SK-N-SH (cell line): ENCODE measurements at regions of chr10 and their contacts with region 1.

Region 1: DNA sequence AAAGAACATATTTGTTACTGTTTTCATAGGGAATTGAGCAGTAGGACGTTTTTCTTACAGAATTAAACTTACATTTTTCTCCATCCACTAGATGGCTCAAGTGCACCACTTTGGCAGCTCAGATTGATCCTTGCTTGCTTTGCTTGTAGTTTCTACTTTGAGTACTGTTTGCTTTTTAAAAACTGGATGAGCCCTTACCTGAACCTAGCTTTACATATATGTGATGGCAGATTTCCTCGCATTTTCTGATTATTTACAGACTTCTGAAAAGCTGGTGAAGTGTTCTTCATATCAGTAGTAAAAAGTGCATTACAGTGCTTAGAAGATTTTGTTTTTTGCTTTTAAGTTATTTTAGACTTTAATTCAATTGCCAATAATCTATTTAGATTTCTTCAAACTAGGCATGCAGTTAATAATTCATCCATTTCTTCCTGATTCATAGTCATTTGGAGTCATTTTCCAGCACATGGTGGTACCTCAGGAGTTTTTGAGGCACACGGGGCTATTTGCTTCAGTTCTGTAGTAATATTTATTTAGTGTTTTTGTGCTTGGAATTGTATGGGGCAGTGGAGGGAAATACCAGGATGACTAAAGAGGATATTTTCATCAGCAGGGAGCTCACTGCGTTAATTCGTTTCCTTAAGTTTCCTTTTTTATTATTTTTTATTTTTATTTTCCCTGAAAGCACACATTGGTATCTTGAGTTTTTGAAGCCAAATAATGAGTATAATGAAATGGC is 57.3 kb downstream of the MAPK8 start:
- DNase-seq: peak; percentile 30
- H3K4me3 ChIP-seq: no peak overlapping the region; a peak in 1 of 4 replicates
- H3K27ac ChIP-seq: peak overlapping the region; percentile 50 to 56; a peak in 3 of 4 replicates
- H3K4me1 ChIP-seq: peaks cover 15 to 26% of the 10 kb centered on the region in 2 experiments; a peak in 2 of 4 replicates
- H3K27me3 ChIP-seq: no peaks in the 10 kb centered on the region
- CTCF ChIP-seq: peak; percentile 82
- EP300 ChIP-seq: no peak
- RAD21 ChIP-seq: peak; percentile 96

Region 2: GRCh38 chr10:48309711-48310226 is 54.0 kb before region 1 on chr10:
- CTCF ChIA-PET with region 1: interaction called, 10 read pairs
- POLR2A ChIA-PET with region 1: no interaction called
- DNase-seq: peak; percentile 25
- H3K4me3 ChIP-seq: 0 out of 4 replicates have a peak overlapping the region, but pooled peaks of 1 of the 2 experiments have one; percentile 11
- H3K27ac ChIP-seq: peak overlapping the region in 1 of 2 experiments; percentile 48; a peak in 2 of 4 replicates
- H3K4me1 ChIP-seq: peaks cover 8 to 18% of the 10 kb centered on the region in 2 experiments; a peak in 3 of 4 replicates
- H3K27me3 ChIP-seq: no peaks in the 10 kb centered on the region
- CTCF ChIP-seq: peak; percentile 43
- EP300 ChIP-seq: peak in 1 of 2 experiments; percentile 7; a peak in 1 of 4 replicates
- RAD21 ChIP-seq: peak; percentile 59

Region 3: GRCh38 chr10:48377751-48378535 is 14.2 kb after region 1 on chr10:
- CTCF ChIA-PET with region 1: interaction called, 12 read pairs
- POLR2A ChIA-PET with region 1: no interaction called
- DNase-seq: no peak
- H3K4me3 ChIP-seq: no peak overlapping the region
- H3K27ac ChIP-seq: no peak overlapping the region
- H3K4me1 ChIP-seq: peaks cover under 1% of the 10 kb centered on the region in 2 experiments; a peak in 1 of 4 replicates
- H3K27me3 ChIP-seq: no peaks in the 10 kb centered on the region
- CTCF ChIP-seq: no peak
- EP300 ChIP-seq: no peak
- RAD21 ChIP-seq: no peak

Region 4: GRCh38 chr10:48506147-48506917 is 142.5 kb after region 1 on chr10:
- CTCF ChIA-PET with region 1: interaction called, 12 read pairs
- POLR2A ChIA-PET with region 1: no interaction called
- DNase-seq: peak; percentile 60
- H3K4me3 ChIP-seq: no peak overlapping the region
- H3K27ac ChIP-seq: no peak overlapping the region
- H3K4me1 ChIP-seq: peaks cover 0 to 16% of the 10 kb centered on the region in 2 experiments; a peak in 1 of 4 replicates
- H3K27me3 ChIP-seq: no peaks in the 10 kb centered on the region
- CTCF ChIP-seq: peak; percentile 52
- EP300 ChIP-seq: no peak
- RAD21 ChIP-seq: peak; percentile 74

Region 5: DNA sequence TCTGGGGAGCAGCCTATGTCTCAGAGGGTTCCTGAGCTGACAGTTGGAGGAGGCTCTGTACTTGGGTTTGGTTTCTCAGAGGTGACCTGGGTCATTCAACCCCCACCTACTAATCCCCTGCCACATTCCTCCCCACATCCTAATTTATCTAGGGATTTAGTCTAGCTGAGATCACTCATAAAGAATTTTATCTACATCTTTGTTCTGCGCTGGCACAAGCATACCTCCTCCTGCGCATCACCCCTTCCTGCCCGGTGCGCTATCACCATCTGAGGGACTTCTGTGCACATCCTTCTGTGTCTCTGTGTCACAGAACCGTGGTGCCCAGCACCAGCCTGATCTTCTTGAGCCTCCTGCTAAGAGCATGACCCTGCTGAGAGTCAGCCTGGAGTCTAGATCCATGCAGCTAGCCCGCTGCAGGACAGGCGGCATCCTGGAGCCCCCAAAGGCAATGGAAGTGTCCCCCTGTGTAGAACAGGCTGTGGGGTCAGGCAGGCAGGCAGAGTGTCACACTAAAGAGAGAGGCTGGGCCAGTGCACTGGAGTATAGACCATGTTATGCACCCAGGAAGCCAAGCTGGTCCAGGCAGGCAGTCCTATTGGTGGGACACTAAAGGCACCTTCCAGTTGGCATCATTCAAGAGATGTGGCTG is 177.5 kb after region 1 on chr10:
- CTCF ChIA-PET with region 1: interaction called, 21 read pairs
- POLR2A ChIA-PET with region 1: no interaction called
- DNase-seq: no peak
- H3K4me3 ChIP-seq: no peak overlapping the region
- H3K27ac ChIP-seq: peak overlapping the region in 1 of 2 experiments; percentile 27; a peak in 1 of 4 replicates
- H3K4me1 ChIP-seq: peaks cover 13 to 34% of the 10 kb centered on the region in 2 experiments; a peak in 3 of 4 replicates
- H3K27me3 ChIP-seq: no peaks in the 10 kb centered on the region
- CTCF ChIP-seq: no peak
- EP300 ChIP-seq: peak in 1 of 2 experiments; percentile 78; a peak in 1 of 4 replicates
- RAD21 ChIP-seq: no peak